Right ventricle myocardium inferior (tissue), 1 donor: ENCODE measurements at regions of chr2 and their contacts with region 1.

Region 1: GRCh38 chr2:188369365-188369764 is 77.7 kb downstream of the GULP1 start:
- DNase-seq: no peak
- ATAC-seq: peak; percentile 56

Region 2: DNA sequence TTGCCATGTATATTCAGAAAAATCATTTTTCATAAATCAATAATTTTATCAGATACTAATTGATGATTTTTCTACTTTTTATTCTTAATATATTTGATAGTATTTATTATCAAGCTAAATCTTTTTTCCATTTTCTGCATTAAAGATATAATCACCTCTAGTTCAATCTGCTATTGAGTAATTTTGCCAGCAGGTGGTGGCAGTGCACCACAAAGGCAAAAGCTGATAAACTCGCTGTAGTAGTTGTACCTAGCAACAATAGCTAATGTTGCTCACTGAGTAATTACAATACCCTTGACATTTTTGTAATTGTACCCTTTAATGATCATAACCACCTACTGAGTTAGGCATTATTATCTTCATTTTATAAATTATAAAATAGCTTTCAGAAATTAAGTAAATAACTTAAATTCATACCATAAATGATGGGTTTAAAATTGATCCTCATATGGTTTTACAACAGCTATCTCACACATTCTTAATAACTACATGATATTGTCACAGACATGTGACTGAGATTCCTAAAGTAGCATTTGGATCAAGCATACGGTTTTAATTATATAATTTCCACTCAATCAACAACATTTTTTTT is 869.3 kb before region 1 on chr2:
- intact Hi-C with region 1: loop called (anchors 5 kb)
- DNase-seq: no peak
- ATAC-seq: peak; percentile 63

Region 3: DNA sequence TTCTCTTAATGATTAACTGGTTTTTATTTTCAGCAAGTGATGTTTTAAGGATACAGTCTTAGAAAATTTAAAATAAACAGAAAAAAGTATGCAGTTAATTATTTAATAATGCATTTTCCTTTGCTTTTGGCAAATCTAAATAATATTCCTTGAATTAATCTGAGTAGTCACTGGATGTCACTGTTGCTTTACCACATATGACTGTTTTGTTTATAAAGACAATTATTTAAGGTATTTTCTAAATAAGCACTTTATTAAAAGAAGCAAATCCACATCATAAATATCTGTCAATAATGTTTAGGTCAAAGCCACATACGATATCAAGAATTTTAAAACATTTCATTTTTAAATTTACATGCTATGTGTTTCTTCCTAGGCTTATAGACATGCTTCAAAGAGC is 774.6 kb before region 1 on chr2:
- intact Hi-C with region 1: loop called (anchors 5 kb)
- DNase-seq: no peak
- ATAC-seq: no peak